CD8-positive, alpha-beta T cell (primary cell): ENCODE measurements at regions of chr14 and their contacts with region 1.

Region 1: GRCh38 chr14:68734231-68734775 is 58.6 kb downstream of the ZFP36L1 start:
- DNase-seq: peak in 8 of 9 experiments; percentile 11 to 69 (median 51)
- ATAC-seq: peak; percentile 81
- H3K4me3 ChIP-seq: no peak overlapping the region
- H3K4me3 Mint-ChIP-seq: peak overlapping the region; percentile 19
- H3K27ac ChIP-seq: peak overlapping the region in 1 of 2 experiments; percentile 76
- H3K27ac Mint-ChIP-seq: peak overlapping the region; percentile 87
- H3K4me1 ChIP-seq: peaks cover 21% of the 10 kb centered on the region
- H3K4me1 Mint-ChIP-seq: peaks cover 34% of the 10 kb centered on the region
- H3K27me3 ChIP-seq: no peaks in the 10 kb centered on the region
- H3K27me3 Mint-ChIP-seq: no peaks in the 10 kb centered on the region
- CTCF ChIP-seq: no peak

Region 2: GRCh38 chr14:68525516-68525915 is 208.8 kb before region 1 on chr14:
- CTCF ChIA-PET with region 1: no interaction called
- POLR2A ChIA-PET with region 1: no interaction called
- intact Hi-C with region 1: no loop called
- DNase-seq: no peak
- ATAC-seq: no peak
- H3K4me3 ChIP-seq: no peak overlapping the region
- H3K4me3 Mint-ChIP-seq: no peak overlapping the region
- H3K27ac ChIP-seq: no peak overlapping the region
- H3K27ac Mint-ChIP-seq: no peak overlapping the region
- H3K4me1 ChIP-seq: no peaks in the 10 kb centered on the region
- H3K4me1 Mint-ChIP-seq: peaks cover 8% of the 10 kb centered on the region
- H3K27me3 ChIP-seq: no peaks in the 10 kb centered on the region
- H3K27me3 Mint-ChIP-seq: no peaks in the 10 kb centered on the region
- CTCF ChIP-seq: no peak

Region 3: GRCh38 chr14:68771607-68772006 is 37.3 kb after region 1 on chr14:
- CTCF ChIA-PET with region 1: no interaction called
- POLR2A ChIA-PET with region 1: no interaction called
- intact Hi-C with region 1: loop called in 1 of 2 experiments (anchors 5 kb)
- DNase-seq: peak in 1 of 9 experiments; percentile 53
- ATAC-seq: peak; percentile 32
- H3K4me3 ChIP-seq: peak overlapping the region; percentile 6 to 7
- H3K4me3 Mint-ChIP-seq: peak overlapping the region; percentile 63
- H3K27ac ChIP-seq: peak overlapping the region in 1 of 2 experiments; percentile 27
- H3K27ac Mint-ChIP-seq: peak overlapping the region; percentile 83
- H3K4me1 ChIP-seq: peaks cover 57% of the 10 kb centered on the region
- H3K4me1 Mint-ChIP-seq: peaks cover 63% of the 10 kb centered on the region
- H3K27me3 ChIP-seq: no peaks in the 10 kb centered on the region
- H3K27me3 Mint-ChIP-seq: no peaks in the 10 kb centered on the region
- CTCF ChIP-seq: no peak

Region 4: GRCh38 chr14:68780358-68781160 is 46.3 kb after region 1 on chr14:
- CTCF ChIA-PET with region 1: no interaction called
- POLR2A ChIA-PET with region 1: interaction called, 3 read pairs
- intact Hi-C with region 1: loop called (anchors 5 kb)
- DNase-seq: peak in 5 of 9 experiments; percentile 36 to 72 (median 58)
- ATAC-seq: peak; percentile 11
- H3K4me3 ChIP-seq: peak overlapping the region; percentile 29 to 41
- H3K4me3 Mint-ChIP-seq: peak overlapping the region; percentile 83
- H3K27ac ChIP-seq: peak overlapping the region; percentile 47 to 86
- H3K27ac Mint-ChIP-seq: peak overlapping the region; percentile 96
- H3K4me1 ChIP-seq: peaks cover 82% of the 10 kb centered on the region
- H3K4me1 Mint-ChIP-seq: peaks cover 84% of the 10 kb centered on the region
- H3K27me3 ChIP-seq: no peaks in the 10 kb centered on the region
- H3K27me3 Mint-ChIP-seq: no peaks in the 10 kb centered on the region
- CTCF ChIP-seq: no peak

Region 5: GRCh38 chr14:68807148-68807600 is 72.9 kb after region 1 on chr14:
- CTCF ChIA-PET with region 1: no interaction called
- POLR2A ChIA-PET with region 1: no interaction called
- intact Hi-C with region 1: no loop called
- DNase-seq: peak in 1 of 9 experiments; percentile 42
- ATAC-seq: peak; percentile 42
- H3K4me3 ChIP-seq: no peak overlapping the region
- H3K4me3 Mint-ChIP-seq: peak overlapping the region; percentile 19
- H3K27ac ChIP-seq: no peak overlapping the region
- H3K27ac Mint-ChIP-seq: peak overlapping the region; percentile 71
- H3K4me1 ChIP-seq: peaks cover 15% of the 10 kb centered on the region
- H3K4me1 Mint-ChIP-seq: peaks cover 38% of the 10 kb centered on the region
- H3K27me3 ChIP-seq: no peaks in the 10 kb centered on the region
- H3K27me3 Mint-ChIP-seq: no peaks in the 10 kb centered on the region
- CTCF ChIP-seq: no peak

Region 6: GRCh38 chr14:69281450-69282169 is 547.3 kb after region 1 on chr14:
- CTCF ChIA-PET with region 1: no interaction called
- POLR2A ChIA-PET with region 1: no interaction called
- intact Hi-C with region 1: no loop called
- DNase-seq: no peak
- ATAC-seq: no peak
- H3K4me3 ChIP-seq: no peak overlapping the region
- H3K4me3 Mint-ChIP-seq: no peak overlapping the region
- H3K27ac ChIP-seq: no peak overlapping the region
- H3K27ac Mint-ChIP-seq: no peak overlapping the region
- H3K4me1 ChIP-seq: no peaks in the 10 kb centered on the region
- H3K4me1 Mint-ChIP-seq: no peaks in the 10 kb centered on the region
- H3K27me3 ChIP-seq: no peaks in the 10 kb centered on the region
- H3K27me3 Mint-ChIP-seq: peaks cover 8% of the 10 kb centered on the region
- CTCF ChIP-seq: no peak